ENCODE measurements at regions of chr13 and their contacts with region 1.

Region 1: GRCh38 chr13:50053844-50054243 is 38.6 kb downstream of the KCNRG start:
- DNase-seq: no peak
- H3K4me3 ChIP-seq: no peak overlapping the region
- H3K27ac ChIP-seq: no peak overlapping the region
- H3K4me1 ChIP-seq: no peaks in the 10 kb centered on the region
- H3K27me3 ChIP-seq: no peaks in the 10 kb centered on the region
- CTCF ChIP-seq: no peak
- POLR2A ChIP-seq: no peak

Region 2: DNA sequence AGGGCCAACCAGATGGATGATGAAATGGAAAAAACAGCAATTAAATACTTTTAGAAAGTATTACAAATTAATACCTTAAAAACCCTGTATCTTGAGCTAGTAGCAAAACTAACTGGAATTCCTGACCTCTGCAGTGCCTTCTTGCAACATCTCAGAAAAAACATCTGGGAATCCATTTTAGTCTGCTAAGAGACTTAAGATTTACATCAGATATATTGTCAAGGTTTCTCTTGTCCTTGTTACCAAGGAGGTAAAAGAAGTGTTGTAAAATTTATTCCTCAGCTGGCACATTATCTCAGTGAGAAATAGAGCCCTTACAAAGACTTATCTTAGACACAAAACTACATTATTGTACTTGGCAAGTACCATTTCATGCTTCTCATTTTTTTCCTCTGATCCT is 20.1 kb before region 1 on chr13:
- intact Hi-C with region 1: loop called (anchors 2 kb)
- DNase-seq: no peak
- H3K4me3 ChIP-seq: no peak overlapping the region
- H3K27ac ChIP-seq: no peak overlapping the region
- H3K4me1 ChIP-seq: no peaks in the 10 kb centered on the region
- H3K27me3 ChIP-seq: no peaks in the 10 kb centered on the region
- CTCF ChIP-seq: no peak
- POLR2A ChIP-seq: no peak